Ascending aorta (tissue), 2 donors: ENCODE measurements at regions of chr10 and their contacts with region 1.

Region 1: DNA sequence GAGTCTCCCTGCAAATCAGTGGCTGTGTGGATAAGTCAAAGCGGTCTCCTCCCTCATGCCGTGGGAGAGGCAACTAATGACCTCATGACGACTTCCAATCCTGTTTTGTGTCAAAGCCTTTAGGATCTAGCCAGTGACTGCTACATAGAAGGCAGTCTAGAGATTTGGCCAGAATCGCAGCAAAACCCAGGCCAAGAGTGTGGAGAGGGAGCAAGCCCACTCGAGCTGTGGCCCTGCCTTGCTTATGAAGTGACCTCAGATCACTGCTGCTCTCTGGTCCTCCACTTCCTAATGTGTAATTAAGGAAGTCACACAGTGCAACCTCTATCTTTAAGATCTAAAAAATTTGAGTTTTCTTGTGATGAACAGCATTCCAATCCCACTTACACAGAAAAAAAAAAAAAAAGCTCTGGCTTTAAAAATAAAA is 296.7 kb upstream of the KLF6 start:
- DNase-seq: peak in 1 of 2 donors; percentile 66
- H3K4me3 ChIP-seq: no peak overlapping the region
- H3K27ac ChIP-seq: peak overlapping the region; percentile 27 to 64
- H3K4me1 ChIP-seq: peaks cover 3 to 23% of the 10 kb centered on the region in 2 donors
- H3K27me3 ChIP-seq: no peaks in the 10 kb centered on the region
- CTCF ChIP-seq: no peak

Region 2: GRCh38 chr10:4131407-4132228 is 49.9 kb after region 1 on chr10:
- intact Hi-C with region 1: loop called (anchors 5 kb)
- DNase-seq: no peak
- H3K4me3 ChIP-seq: no peak overlapping the region
- H3K27ac ChIP-seq: peak overlapping the region; percentile 70 to 73
- H3K4me1 ChIP-seq: peaks cover 9 to 17% of the 10 kb centered on the region in 2 donors
- H3K27me3 ChIP-seq: no peaks in the 10 kb centered on the region
- CTCF ChIP-seq: no peak